Heart right ventricle (tissue), 16 donors: ENCODE measurements at regions of chr6 and their contacts with region 1.

Region 1: GRCh38 chr6:76752841-76753240 is 680.4 kb upstream of the IMPG1 start:
- DNase-seq: no peak
- ATAC-seq: no peak
- H3K4me3 ChIP-seq: no peak overlapping the region
- H3K27ac ChIP-seq: no peak overlapping the region
- H3K4me1 ChIP-seq: no peaks in the 10 kb centered on the region
- H3K27me3 ChIP-seq: no peaks in the 10 kb centered on the region
- CTCF ChIP-seq: no peak

Region 2: GRCh38 chr6:76724760-76725159 is 28.1 kb before region 1 on chr6:
- intact Hi-C with region 1: loop called in 1 of 10 experiments (anchors 2 kb)
- DNase-seq: no peak
- ATAC-seq: no peak
- H3K4me3 ChIP-seq: no peak overlapping the region
- H3K27ac ChIP-seq: no peak overlapping the region
- H3K4me1 ChIP-seq: no peaks in the 10 kb centered on the region
- H3K27me3 ChIP-seq: no peaks in the 10 kb centered on the region
- CTCF ChIP-seq: no peak